ENCODE measurements at regions of chr2 and their contacts with region 1.

Region 1: DNA sequence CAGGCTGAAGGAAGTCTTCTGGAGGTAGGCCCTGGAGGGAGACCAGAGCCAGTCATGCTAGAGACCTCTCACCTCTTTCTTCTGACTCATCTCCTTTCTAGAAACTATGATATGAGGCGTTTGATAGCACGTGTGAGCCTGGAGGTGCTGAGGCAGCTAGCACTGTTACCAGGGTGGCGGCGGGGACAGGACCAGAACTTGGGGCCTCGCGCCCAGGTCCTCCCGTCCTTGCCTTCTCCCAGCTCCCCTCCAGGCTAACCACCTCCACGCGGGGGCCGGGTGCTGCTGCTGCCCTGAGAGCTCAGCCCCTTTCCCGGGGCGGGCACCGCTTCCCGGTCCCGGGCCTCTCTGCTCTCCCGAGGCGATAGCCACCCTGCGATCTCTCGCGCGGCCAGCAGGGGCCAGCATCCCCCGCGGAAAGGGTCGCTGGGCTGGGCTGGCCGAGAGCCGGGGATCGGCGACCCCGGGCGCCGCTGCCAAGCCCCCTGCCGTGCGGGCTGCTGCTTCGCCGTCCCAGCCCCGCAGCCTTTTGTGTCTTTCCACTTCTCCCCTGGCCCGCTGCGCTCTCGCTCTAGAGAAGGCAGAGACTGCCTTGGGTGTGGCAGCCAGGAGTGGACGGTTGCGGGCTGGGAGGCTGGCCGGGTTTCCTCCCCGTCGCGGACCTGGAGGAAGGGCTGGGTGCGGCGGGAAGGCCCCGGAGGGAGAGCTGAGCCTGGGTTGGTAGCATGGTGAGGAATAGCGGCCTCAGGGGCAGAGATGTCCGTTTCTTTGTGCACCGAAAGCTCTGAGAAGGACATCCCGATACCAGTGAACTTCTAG is 49.1 kb downstream of the TMEM17 start:
- DNase-seq: peak; percentile 63
- ATAC-seq: peak; percentile 97
- H3K4me3 ChIP-seq: peak overlapping the region; percentile 43 to 70 (median 59); a peak in 5 of 6 replicates
- H3K27ac ChIP-seq: peak overlapping the region; percentile 76
- H3K4me1 ChIP-seq: peaks cover 70% of the 10 kb centered on the region
- H3K27me3 ChIP-seq: no peaks in the 10 kb centered on the region
- CTCF ChIP-seq: peak; percentile 99
- EP300 ChIP-seq: peak; percentile 28 to 44; a peak in 1 of 4 replicates
- POLR2A ChIP-seq: peak in 1 of 2 experiments; percentile 28; a peak in 1 of 4 replicates
- RAD21 ChIP-seq: peak; percentile 100

Region 2: GRCh38 chr2:61620244-61621159 is 836.4 kb before region 1 on chr2:
- CTCF ChIA-PET with region 1: no interaction called
- POLR2A ChIA-PET with region 1: no interaction called
- in situ Hi-C with region 1: no loop called
- intact Hi-C with region 1: no loop called
- DNase-seq: peak; percentile 25
- ATAC-seq: peak; percentile 47; the same call in 2 of the 3 replicates
- H3K4me3 ChIP-seq: no peak overlapping the region
- H3K27ac ChIP-seq: no peak overlapping the region
- H3K4me1 ChIP-seq: no peaks in the 10 kb centered on the region
- H3K27me3 ChIP-seq: peaks cover 0 to 1% of the 10 kb centered on the region in 2 experiments; a peak in 2 of 5 replicates
- CTCF ChIP-seq: no peak
- EP300 ChIP-seq: no peak
- POLR2A ChIP-seq: no peak
- RAD21 ChIP-seq: no peak

Region 3: DNA sequence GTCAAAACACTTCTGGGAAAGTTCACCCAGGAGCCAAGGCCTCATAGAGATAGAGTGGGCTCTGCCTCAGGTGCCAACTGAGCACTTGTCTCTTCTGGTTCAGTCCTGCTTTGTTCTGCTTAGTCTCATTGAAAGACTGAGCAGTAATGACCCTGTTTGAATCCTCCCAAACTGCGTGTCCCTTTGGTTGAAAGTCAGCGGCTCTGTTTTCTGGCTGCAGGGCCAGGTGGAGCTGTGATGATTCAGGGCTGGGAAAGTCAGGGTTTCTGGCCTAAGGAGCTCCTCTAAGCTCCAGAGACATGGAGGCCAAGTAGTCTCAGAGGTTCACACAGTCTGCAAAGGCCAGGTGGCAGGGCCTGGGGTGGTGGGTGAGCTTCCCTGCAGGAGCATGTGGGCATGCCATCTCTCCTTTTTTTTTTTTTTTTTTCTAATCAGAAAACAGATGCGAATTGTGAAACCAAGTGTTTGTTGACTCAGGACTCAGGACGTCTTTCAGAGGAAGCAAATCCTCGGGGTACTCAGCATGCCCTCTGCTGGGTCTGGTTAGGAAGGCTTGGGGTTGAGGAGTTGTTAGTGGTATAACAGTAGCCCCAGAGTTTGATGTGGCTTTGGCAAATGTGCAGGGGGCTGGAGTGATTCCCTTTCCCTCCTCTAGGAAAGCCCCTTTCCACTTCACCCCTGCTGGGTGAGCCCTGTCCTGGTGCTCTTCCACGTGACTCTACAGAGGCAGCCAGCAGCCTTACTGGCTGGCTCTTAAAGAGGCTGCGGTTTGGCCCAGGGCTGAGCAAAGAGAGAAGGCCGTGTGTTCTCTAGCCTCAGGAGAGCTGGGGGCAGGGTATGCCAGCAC is 10.8 kb after region 1 on chr2:
- CTCF ChIA-PET with region 1: no interaction called
- POLR2A ChIA-PET with region 1: interaction called, 12 read pairs
- in situ Hi-C with region 1: no loop called
- intact Hi-C with region 1: no loop called
- DNase-seq: peak; percentile 71
- ATAC-seq: peak; percentile 82
- H3K4me3 ChIP-seq: peak overlapping the region in 1 of 3 experiments; percentile 39; a peak in 2 of 6 replicates
- H3K27ac ChIP-seq: peak overlapping the region; percentile 51
- H3K4me1 ChIP-seq: peaks cover 87% of the 10 kb centered on the region
- H3K27me3 ChIP-seq: no peaks in the 10 kb centered on the region
- CTCF ChIP-seq: peak; percentile 53
- EP300 ChIP-seq: no peak
- POLR2A ChIP-seq: no peak
- RAD21 ChIP-seq: no peak

Region 4: DNA sequence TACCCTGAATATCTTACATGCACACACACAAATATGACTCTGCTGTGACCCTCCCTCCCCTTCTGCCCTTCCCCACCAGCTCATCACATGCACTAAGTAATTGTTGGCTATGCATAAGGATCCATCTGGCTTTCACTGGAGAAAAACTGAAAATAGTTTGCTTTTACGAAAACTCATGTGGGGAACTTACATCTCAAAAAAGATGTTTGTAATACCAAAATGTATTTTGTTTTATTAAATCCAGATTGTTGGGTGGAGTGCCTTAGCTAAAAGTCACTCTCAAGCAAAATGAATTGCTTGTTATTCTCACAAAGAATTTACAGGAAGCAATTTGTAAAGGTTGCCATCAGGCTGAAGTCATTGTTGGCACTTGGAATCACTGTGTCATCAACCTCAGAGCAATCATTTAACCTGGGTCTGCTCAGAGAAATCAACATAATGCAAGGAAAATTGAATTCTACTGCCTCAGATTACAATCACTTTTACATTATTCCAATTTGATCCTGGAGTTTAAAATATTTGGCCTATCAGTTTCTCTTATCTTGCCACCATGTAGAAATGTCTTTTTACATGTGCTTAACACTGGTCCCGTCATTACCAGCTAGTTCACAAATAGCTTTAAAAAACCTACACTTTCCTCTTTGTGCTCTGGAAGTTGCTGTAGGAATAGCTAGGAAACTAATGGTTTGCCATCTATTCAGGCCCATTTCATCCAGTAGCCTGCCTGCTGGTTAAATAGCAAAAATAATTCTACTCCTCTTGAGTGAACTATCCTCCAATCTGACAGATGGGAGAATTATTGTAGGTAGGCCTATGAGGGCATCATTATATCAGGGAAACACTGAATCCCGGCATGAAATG is 139.4 kb after region 1 on chr2:
- CTCF ChIA-PET with region 1: no interaction called
- POLR2A ChIA-PET with region 1: no interaction called
- in situ Hi-C with region 1: no loop called
- intact Hi-C with region 1: no loop called
- DNase-seq: no peak
- ATAC-seq: no peak
- H3K4me3 ChIP-seq: no peak overlapping the region
- H3K27ac ChIP-seq: no peak overlapping the region
- H3K4me1 ChIP-seq: peaks cover 28% of the 10 kb centered on the region
- H3K27me3 ChIP-seq: no peaks in the 10 kb centered on the region
- CTCF ChIP-seq: no peak
- EP300 ChIP-seq: no peak
- POLR2A ChIP-seq: no peak
- RAD21 ChIP-seq: no peak

Region 5: GRCh38 chr2:62774555-62775366 is 317.8 kb after region 1 on chr2:
- CTCF ChIA-PET with region 1: interaction called, 34 read pairs
- POLR2A ChIA-PET with region 1: interaction called, 14 read pairs
- in situ Hi-C with region 1: loop called (anchors 5 kb)
- intact Hi-C with region 1: loop called (anchors 1 kb)
- DNase-seq: peak; percentile 78
- ATAC-seq: peak; percentile 85
- H3K4me3 ChIP-seq: no peak overlapping the region
- H3K27ac ChIP-seq: peak overlapping the region; percentile 41
- H3K4me1 ChIP-seq: peaks cover 23% of the 10 kb centered on the region
- H3K27me3 ChIP-seq: no peaks in the 10 kb centered on the region
- CTCF ChIP-seq: peak; percentile 73
- EP300 ChIP-seq: peak in 1 of 2 experiments; percentile 52; a peak in 2 of 4 replicates
- POLR2A ChIP-seq: no peak
- RAD21 ChIP-seq: peak; percentile 75